ENCODE measurements at regions of chr12 and their contacts with region 1.

Region 1: DNA sequence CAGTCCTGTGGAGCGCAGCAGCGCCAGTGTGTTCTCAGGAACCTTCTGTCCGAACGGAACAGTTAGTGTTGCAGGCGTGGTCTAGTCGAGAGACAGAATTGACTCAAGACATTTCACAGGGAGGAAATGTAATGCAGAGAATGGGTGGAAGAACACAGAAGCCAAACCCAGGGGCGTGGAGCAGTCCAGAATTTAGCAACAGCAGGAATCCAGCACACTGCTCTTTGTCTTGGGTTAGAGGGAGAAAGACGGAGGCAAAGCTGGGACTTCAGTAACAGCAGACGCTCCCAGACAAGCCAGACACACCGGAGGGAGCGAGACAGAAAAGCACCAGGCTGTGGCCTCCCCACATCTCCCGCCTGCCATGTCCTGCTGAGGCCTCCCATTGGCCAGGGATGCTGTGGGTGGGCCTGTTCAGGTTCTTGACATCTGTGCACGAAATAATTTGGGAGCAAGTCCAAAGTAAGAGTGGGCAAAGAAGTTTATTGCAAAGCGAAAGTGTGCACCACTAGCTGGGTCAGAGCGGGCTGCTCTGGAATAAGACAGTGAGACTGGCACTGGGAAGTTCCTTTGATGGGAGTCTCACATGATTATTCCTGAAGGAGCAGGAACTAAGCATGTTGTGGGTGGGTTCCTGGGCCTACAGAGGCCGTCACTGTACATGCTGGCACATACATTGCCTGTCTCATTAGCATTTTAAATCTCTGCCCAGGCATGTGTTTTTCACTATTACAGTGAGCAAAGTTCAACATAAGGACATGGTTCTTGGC is 339.3 kb upstream of the SFSWAP start:
- DNase-seq: no peak
- H3K4me3 ChIP-seq: peak overlapping the region in 1 of 3 donors; percentile 45
- H3K27ac ChIP-seq: no peak overlapping the region
- H3K4me1 ChIP-seq: no peaks in the 10 kb centered on the region
- H3K27me3 ChIP-seq: peaks cover 0 to under 1% of the 10 kb centered on the region in 2 donors
- CTCF ChIP-seq: no peak
- POLR2A ChIP-seq: no peak

Region 2: DNA sequence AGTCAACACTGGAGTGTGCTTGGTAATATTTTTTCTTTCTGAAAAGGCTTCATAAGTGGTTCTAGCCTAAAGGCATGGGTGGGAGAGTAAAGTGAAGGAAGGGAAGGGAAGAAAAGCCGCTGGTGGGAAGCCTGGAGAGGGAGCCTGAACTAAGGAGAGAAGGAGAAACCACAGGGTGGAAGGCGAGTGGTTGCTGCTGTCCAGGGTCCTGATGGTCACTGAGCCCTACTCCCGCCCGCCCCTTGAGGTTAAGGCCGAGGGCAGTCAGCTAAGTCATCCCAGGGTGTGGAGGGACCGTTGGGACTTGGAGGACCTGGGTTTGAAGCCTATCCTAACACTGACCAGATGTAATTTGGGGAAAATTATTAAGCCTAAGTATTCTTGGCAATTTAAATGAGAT is 844.8 kb before region 1 on chr12:
- intact Hi-C with region 1: no loop called
- DNase-seq: no peak
- H3K4me3 ChIP-seq: no peak overlapping the region
- H3K27ac ChIP-seq: no peak overlapping the region
- H3K4me1 ChIP-seq: no peaks in the 10 kb centered on the region
- H3K27me3 ChIP-seq: no peaks in the 10 kb centered on the region
- CTCF ChIP-seq: no peak
- POLR2A ChIP-seq: no peak

Region 3: DNA sequence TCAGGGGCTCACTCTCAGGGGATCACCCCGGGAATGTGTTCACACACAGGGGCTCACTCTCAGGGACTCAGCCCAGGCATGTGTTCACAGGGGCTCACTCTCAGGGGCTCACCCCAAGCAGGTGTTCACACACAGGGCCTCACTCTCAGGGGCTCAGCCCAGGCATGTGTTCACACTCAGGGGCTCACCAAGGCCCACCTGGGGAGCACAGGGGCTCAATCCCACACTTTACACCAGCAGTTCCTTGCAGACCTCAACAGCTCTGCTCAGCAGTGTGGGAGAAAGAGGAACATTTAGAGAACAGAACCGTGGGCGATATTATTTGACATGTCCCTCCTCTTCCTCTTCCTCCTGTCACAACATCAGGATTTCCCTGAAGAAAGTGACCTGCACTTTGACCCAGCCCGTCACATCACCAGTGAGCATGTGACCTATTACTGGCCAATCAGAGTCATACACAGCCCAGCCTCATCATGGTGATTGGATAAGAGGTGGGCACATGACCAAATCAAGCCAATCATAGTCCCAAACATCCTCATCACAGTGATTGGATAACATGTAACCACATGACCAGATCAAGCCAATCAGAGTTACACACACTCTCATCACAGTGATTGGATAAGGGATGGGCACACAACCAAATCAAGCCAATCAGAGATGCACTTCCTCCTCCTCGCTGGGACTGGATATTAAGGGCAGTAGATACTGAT is 20.1 kb before region 1 on chr12:
- intact Hi-C with region 1: loop called (anchors 1 kb)
- DNase-seq: no peak
- H3K4me3 ChIP-seq: no peak overlapping the region
- H3K27ac ChIP-seq: no peak overlapping the region
- H3K4me1 ChIP-seq: no peaks in the 10 kb centered on the region
- H3K27me3 ChIP-seq: peaks cover 0 to 41% of the 10 kb centered on the region in 2 donors
- CTCF ChIP-seq: no peak
- POLR2A ChIP-seq: no peak

Measured in breast epithelium (tissue), 4 donors.